ENCODE measurements at regions of chr3 and their contacts with region 1.

Region 1: GRCh38 chr3:50587806-50588758 is 18.8 kb downstream of the HEMK1 start:
- DNase-seq: peak in 4 of 5 donors; percentile 33 to 81 (median 39)
- H3K4me3 ChIP-seq: peak overlapping the region in 1 of 2 donors; percentile 29
- H3K4me3 Mint-ChIP-seq: peak overlapping the region; percentile 52 to 84 (median 74)
- H3K27ac ChIP-seq: peak overlapping the region; percentile 51
- H3K27ac Mint-ChIP-seq: peak overlapping the region; percentile 83 to 97 (median 93)
- H3K4me1 ChIP-seq: peaks cover 74% of the 10 kb centered on the region
- H3K4me1 Mint-ChIP-seq: peaks cover 44 to 79% (median 60%) of the 10 kb centered on the region in 4 donors
- H3K27me3 ChIP-seq: no peaks in the 10 kb centered on the region
- H3K27me3 Mint-ChIP-seq: no peaks in the 10 kb centered on the region

Region 2: GRCh38 chr3:50321336-50322114 is 266.6 kb before region 1 on chr3:
- CTCF ChIA-PET with region 1: no interaction called
- POLR2A ChIA-PET with region 1: no interaction called
- intact Hi-C with region 1: no loop called
- DNase-seq: peak; percentile 80 to 88 (median 83)
- H3K4me3 ChIP-seq: peak overlapping the region; percentile 23 to 87
- H3K4me3 Mint-ChIP-seq: peak overlapping the region; percentile 80 to 90 (median 86)
- H3K27ac ChIP-seq: peak overlapping the region; percentile 73
- H3K27ac Mint-ChIP-seq: peak overlapping the region; percentile 90 to 95 (median 93)
- H3K4me1 ChIP-seq: peaks cover 38% of the 10 kb centered on the region
- H3K4me1 Mint-ChIP-seq: peaks cover 18 to 57% (median 38%) of the 10 kb centered on the region in 4 donors
- H3K27me3 ChIP-seq: no peaks in the 10 kb centered on the region
- H3K27me3 Mint-ChIP-seq: no peaks in the 10 kb centered on the region

Region 3: DNA sequence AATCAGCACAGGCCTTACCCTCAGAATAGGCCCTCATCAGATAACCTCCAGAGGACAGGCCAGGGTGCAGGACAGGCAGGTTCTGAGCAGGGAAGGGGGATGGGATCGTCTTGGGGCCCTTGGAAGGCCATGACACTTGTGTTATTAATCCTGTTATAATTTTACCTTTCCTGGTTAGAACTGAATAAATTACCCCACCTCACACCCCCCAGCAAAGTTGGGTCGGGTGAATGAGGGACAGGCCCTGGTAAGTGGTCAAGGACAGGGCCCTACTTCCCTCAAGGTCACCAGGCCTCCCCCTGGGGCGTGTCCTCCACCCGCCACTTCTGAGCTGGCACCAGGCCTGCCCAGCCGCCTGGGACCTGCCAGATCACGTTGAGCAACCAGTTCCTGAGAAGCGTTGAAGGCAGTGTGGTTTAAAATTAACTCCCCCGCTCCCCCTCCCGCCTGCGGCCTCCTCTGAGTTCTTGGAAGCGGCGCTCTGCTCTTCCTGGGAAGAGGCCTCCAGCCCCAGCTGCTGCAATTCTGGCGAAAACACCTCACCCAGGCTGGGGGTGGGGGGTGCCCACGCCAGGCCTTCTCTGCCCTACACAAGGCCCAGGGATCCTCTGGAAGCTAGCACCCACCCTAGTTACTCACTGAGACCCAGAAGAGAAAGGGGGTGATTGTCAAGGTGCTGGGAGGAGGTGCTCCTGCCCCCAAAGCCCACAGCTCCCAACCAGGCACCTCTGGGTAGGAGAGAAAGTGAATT is 12.9 kb after region 1 on chr3:
- CTCF ChIA-PET with region 1: interaction called, 996 read pairs
- POLR2A ChIA-PET with region 1: interaction called, 1,072 read pairs
- intact Hi-C with region 1: loop called (anchors 1 kb)
- DNase-seq: peak; percentile 62 to 80 (median 65)
- H3K4me3 ChIP-seq: peak overlapping the region in 1 of 2 donors; percentile 37
- H3K4me3 Mint-ChIP-seq: peak overlapping the region; percentile 75 to 99 (median 84)
- H3K27ac ChIP-seq: peak overlapping the region; percentile 81
- H3K27ac Mint-ChIP-seq: peak overlapping the region; percentile 90 to 99 (median 95)
- H3K4me1 ChIP-seq: peaks cover 79% of the 10 kb centered on the region
- H3K4me1 Mint-ChIP-seq: peaks cover 58 to 83% (median 69%) of the 10 kb centered on the region in 4 donors
- H3K27me3 ChIP-seq: no peaks in the 10 kb centered on the region
- H3K27me3 Mint-ChIP-seq: no peaks in the 10 kb centered on the region

Region 4: GRCh38 chr3:50652709-50653108 is 64.6 kb after region 1 on chr3:
- CTCF ChIA-PET with region 1: interaction called, 16 read pairs
- POLR2A ChIA-PET with region 1: no interaction called
- intact Hi-C with region 1: no loop called
- DNase-seq: peak in 4 of 5 donors; percentile 40 to 54 (median 50)
- H3K4me3 ChIP-seq: no peak overlapping the region
- H3K4me3 Mint-ChIP-seq: no peak overlapping the region
- H3K27ac ChIP-seq: no peak overlapping the region
- H3K27ac Mint-ChIP-seq: peak overlapping the region in 1 of 7 donors; percentile 76
- H3K4me1 ChIP-seq: no peaks in the 10 kb centered on the region
- H3K4me1 Mint-ChIP-seq: peaks cover 0 to 6% (median under 1%) of the 10 kb centered on the region in 4 donors
- H3K27me3 ChIP-seq: no peaks in the 10 kb centered on the region
- H3K27me3 Mint-ChIP-seq: no peaks in the 10 kb centered on the region

Region 5: DNA sequence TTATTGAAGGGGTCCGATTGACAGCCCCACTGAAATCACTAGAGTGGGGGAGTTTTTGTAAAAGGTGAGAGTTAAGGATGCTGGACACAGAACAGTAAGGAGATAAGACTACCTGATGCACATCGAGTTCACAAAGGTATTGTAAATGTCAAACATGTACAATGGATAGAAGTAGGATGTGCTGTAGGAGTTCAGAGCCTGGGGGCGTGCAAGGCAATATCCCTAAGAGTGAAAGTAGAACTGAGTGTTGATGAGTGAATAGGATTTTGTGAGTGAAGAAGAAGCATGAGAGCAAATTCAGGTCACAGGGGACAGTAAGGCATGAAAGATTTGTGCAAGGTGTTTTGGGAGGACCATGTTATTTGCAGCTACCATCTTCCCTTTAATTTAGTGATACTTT is 108.2 kb after region 1 on chr3:
- CTCF ChIA-PET with region 1: no interaction called
- POLR2A ChIA-PET with region 1: no interaction called
- intact Hi-C with region 1: no loop called
- DNase-seq: no peak
- H3K4me3 ChIP-seq: no peak overlapping the region
- H3K4me3 Mint-ChIP-seq: no peak overlapping the region
- H3K27ac ChIP-seq: no peak overlapping the region
- H3K27ac Mint-ChIP-seq: no peak overlapping the region
- H3K4me1 ChIP-seq: no peaks in the 10 kb centered on the region
- H3K4me1 Mint-ChIP-seq: no peaks in the 10 kb centered on the region
- H3K27me3 ChIP-seq: no peaks in the 10 kb centered on the region
- H3K27me3 Mint-ChIP-seq: peaks cover 0 to 1% of the 10 kb centered on the region in 2 donors